Natural killer cell (primary cell): ENCODE measurements at regions of chr3 and their contacts with region 1.

Region 1: GRCh38 chr3:183306798-183307671 is 54.0 kb downstream of the B3GNT5 start:
- DNase-seq: peak; percentile 23 to 41
- ATAC-seq: peak; percentile 93 to 96 (median 96)
- H3K4me3 ChIP-seq: no peak overlapping the region
- H3K4me3 Mint-ChIP-seq: no peak overlapping the region
- H3K27ac ChIP-seq: no peak overlapping the region
- H3K27ac Mint-ChIP-seq: peak overlapping the region; percentile 67 to 78
- H3K4me1 ChIP-seq: peaks cover 7% of the 10 kb centered on the region
- H3K4me1 Mint-ChIP-seq: peaks cover 18 to 19% of the 10 kb centered on the region in 2 donors
- H3K27me3 ChIP-seq: no peaks in the 10 kb centered on the region
- H3K27me3 Mint-ChIP-seq: peaks cover 0 to 5% of the 10 kb centered on the region in 2 donors
- CTCF ChIP-seq: no peak

Region 2: DNA sequence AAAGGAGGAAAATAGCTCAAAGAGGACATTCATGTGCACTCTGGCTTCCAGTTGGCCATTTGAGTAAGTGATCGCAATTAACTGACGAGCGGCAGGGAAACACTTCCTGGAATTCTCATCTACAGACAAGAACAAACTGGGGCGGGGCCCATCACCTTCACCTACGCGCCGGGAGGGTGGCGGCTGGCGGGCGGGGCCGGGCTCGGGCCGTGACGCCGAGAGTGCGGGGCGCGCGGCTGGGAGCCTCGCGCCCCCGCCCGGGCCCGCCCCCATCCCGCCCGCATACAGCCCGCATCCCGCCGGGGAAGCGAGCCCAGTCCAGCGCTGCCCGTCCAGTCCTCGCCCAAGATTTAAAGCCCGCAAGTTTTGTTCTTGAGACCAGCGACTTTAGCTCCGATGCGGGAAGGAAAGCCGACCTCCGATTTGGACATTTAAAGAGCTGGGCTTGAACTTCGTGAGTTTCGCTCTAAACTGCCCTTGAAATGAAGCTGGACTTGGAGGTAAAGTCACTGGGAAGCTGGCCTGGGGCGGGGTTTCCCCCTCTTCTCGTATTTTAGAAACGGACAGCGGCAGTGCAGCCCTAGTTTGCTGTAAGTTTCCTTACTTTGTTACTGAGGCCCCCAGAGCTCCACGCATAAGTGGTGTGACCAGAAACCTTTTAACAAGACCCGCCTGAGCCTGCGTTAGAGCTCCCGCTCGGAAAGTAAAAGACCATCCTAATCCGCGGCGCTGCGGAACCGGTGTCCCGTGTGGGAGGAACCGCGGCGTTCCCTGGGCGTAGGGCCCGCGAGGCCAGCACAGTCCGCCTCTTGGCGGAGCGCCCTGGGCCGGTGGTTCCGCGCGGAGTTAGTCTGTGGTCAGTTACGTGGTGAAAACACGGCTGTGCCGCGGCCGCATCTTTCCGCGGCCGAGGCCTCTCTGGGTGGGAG is 53.8 kb before region 1 on chr3 and contains the start of gene B3GNT5:
- intact Hi-C with region 1: loop called (anchors 5 kb)
- DNase-seq: peak; percentile 28 to 44
- ATAC-seq: peak; percentile 62 to 72 (median 66)
- H3K4me3 ChIP-seq: peak within 1 kb of the TSS; percentile 45
- H3K4me3 Mint-ChIP-seq: peak within 1 kb of the TSS; percentile 83
- H3K27ac ChIP-seq: no peak within 1 kb of the TSS
- H3K27ac Mint-ChIP-seq: peak within 1 kb of the TSS in 1 of 2 donors; percentile 78
- H3K4me1 ChIP-seq: peaks cover 14% of the 10 kb centered on the region
- H3K4me1 Mint-ChIP-seq: peaks cover 5 to 6% of the 10 kb centered on the region in 2 donors
- H3K27me3 ChIP-seq: peaks cover 20% of the 10 kb centered on the region
- H3K27me3 Mint-ChIP-seq: peaks cover 30 to 35% of the 10 kb centered on the region in 2 donors
- CTCF ChIP-seq: no peak
- total RNA-seq, gene B3GNT5: 1.2 to 4.5 (median 3.4) TPM

Region 3: DNA sequence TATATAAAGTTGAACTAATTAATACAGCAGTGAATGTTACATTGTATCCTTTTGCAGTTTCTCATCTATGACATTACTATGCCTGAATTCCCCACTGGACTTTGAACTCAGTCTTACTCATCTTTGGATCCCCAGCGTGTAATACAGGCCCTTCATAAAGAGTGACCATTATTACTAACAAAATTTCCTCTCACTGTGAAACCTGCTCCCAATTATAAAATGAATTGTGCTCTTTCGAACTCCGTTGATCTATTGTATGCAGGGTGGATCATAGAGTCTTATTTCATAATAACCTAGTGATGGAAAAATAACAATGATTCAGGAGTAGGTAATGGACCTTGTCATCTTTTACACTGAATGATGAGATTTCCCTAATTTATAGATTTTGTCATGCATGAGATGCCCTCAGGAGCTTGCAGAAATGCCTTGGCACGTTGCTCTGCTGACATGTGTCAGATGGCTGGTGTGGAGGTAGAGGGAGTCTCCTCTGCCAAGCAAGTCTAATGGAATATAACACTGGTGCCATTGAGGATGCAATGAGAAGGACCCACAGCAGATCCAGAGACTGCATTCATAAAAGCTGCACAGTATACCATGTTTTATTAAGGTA is 28.5 kb before region 1 on chr3:
- intact Hi-C with region 1: no loop called
- DNase-seq: no peak
- ATAC-seq: peak in 1 of 3 donors; percentile 24
- H3K4me3 ChIP-seq: no peak overlapping the region
- H3K4me3 Mint-ChIP-seq: no peak overlapping the region
- H3K27ac ChIP-seq: no peak overlapping the region
- H3K27ac Mint-ChIP-seq: no peak overlapping the region
- H3K4me1 ChIP-seq: no peaks in the 10 kb centered on the region
- H3K4me1 Mint-ChIP-seq: no peaks in the 10 kb centered on the region
- H3K27me3 ChIP-seq: no peaks in the 10 kb centered on the region
- H3K27me3 Mint-ChIP-seq: peaks cover 0 to 5% of the 10 kb centered on the region in 2 donors
- CTCF ChIP-seq: no peak